Left cardiac atrium (tissue), 4 donors: ENCODE measurements at regions of chr19 and their contacts with region 1.

Region 1: GRCh38 chr19:49148784-49149651 is 6.2 kb downstream of the HRC start:
- DNase-seq: peak; percentile 99
- ATAC-seq: peak; percentile 81 to 88

Region 2: DNA sequence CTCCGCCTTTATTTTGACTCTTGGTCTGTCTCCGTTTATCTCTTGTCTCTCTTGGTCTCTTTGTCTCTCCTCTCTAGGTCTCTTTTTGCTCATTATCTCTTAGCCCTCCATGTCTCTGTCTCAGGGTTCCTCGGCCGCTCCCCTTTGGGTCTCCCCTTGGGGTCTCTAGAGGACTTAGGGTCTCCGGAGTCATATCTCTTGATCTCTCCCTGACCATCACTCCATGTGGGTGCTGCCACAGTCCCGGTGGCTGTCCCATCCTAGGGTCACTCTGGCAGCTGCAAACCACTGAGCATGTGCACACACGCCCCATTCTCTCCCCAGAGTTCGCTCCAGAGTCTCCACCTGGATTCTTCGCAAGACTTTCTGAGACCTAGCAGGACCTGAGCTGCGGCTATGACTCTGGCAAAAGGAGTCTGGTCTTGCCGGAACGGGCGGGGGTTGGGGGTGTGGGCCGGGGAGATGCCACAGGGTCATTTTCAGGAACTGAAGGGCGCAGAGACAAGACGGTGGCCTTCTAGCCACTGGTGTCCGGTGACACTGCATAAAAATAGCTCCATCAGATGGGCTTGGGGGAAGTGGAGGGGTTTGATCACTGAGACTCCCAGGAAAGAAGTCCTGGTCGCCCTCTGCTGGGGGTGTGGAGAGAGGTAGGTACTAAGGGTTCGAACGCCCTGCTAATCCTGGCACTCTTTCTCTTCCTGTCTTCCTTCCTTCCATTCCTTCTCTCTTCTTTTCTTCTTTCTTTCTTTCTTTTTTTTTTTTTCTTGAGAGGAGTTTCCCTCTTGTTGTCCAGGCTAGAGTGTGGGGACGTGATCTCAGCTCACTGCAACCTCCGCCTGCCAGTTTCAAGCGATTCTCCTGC is 75.3 kb before region 1 on chr19:
- intact Hi-C with region 1: no loop called
- DNase-seq: no peak
- ATAC-seq: peak; percentile 33 to 54

Region 3: DNA sequence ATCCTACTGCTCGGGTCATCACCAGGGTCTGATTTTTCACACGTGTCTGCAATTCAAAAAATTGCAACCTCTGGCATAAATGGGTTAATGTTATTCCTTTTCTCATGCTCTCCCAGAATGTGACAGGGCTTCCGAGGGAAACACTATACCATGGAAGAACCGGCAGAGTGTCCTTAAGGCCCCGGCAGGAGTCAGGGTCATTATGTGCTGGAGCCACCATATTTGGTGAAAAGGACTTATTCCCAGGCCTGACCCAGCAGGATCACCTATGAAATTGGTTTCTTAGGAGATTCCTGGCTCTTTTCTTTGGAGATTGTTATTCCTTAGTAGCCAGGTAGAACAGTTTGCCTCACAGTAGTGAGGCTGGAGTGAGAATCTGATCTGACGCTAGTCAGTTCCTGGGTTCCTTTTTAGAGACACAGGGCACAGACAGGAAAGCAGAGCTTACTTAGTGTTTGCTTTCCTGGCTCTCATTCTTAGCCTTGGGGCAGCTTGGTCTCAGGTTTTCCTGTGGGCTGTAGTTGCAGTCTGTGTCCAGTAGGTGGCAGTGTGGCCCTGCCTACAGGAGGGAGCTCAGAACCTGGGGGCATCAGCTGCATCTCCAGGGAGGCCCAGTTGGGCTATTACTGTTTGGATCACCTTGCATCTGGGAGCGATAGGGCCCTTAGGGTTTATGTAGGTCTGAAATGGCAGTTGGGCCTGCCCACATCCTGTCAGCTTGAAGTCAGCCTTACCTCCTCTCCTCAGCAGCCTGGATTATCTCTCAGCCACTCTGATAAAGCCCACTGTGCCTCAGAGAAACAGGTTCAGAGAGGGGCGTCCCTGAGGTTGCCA is 51.3 kb before region 1 on chr19:
- intact Hi-C with region 1: loop called in 1 of 2 experiments (anchors 5 kb)
- DNase-seq: peak; percentile 61
- ATAC-seq: peak; percentile 55 to 65

Region 4: DNA sequence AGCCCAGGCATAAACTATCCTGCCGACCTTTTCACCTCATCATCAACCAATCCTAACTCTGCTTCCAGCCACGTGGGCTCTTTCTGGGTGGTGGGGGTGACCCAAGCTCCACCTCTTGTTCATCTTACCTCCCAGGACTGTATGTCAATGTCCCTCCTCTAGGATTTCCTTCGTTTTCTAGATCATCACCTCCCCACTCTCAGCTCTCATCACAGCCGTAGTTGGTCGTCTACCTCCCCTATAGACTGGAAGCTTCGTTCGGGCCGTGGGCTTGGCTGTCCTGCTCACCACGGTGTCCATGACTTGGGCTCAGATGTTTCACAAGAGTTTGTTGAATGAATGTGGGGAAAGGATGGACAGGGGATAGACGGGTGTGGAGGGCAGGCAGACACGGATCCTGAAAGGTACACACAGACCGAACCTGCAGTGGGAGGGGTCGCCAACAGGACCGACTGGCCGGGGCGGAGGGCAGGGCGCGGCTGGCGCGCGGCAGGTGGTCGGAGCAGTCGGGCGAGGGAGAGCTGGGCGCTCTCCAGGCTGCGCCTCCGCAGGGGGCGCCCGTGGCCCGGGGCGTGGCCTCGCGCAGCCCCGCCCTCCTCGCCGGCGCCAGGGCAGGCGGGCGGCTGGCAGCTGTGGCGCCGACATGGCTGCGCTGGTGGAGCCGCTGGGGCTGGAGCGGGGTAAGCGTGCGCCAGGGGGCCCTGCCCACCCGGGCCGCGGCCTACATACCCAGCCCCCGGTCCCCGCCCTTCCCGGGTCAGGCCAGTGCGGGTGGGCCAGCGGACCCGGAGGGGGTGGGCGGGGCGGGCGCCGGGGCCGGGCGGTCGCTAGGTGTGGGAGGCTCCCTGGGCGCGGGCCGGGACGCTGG is 35.0 kb before region 1 on chr19 and contains the start of gene LIN7B:
- intact Hi-C with region 1: loop called in 1 of 2 experiments (anchors 5 kb)
- DNase-seq: peak; percentile 76
- ATAC-seq: peak; percentile 66 to 72
- total RNA-seq, gene LIN7B: 11.4 to 14.9 TPM